ENCODE measurements at regions of chr11 and their contacts with region 1.

Region 1: GRCh38 chr11:62233730-62234129 is 8.3 kb upstream of the SCGB1D2 start:
- DNase-seq: no peak

Region 2: GRCh38 chr11:62208785-62209144 is 25.0 kb before region 1 on chr11:
- intact Hi-C with region 1: no loop called
- DNase-seq: no peak

Region 3: DNA sequence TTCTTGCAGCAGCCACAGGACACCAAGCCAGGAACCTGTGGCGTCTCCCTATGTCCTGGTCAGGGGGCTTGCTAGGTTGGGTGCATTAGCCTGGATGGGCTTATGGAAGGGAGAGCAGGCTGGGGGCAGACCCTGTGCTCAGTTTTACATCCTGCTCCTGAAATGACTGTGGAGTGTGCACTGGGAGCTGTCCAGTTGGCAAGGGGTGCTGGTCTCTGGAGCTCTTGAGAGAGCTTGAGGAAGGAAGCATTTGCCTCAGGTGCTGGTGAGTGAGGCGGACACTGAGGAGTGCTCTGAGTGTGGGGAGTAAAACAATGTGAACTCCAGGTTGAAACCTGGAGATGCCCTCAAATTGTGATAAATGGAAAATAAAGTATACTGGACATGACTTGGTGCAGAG is 61.8 kb after region 1 on chr11:
- intact Hi-C with region 1: loop called (anchors 10 kb)
- DNase-seq: no peak

Region 4: GRCh38 chr11:62612366-62613290 is 378.9 kb after region 1 on chr11 and contains the starts of genes EML3 and ROM1:
- intact Hi-C with region 1: no loop called
- DNase-seq: peak; percentile 72 to 95 (median 87)